MCF 10A (cell line): ENCODE measurements at regions of chr16 and their contacts with region 1.

Region 1: GRCh38 chr16:31179747-31180459 is at the start of gene FUS:
- DNase-seq: peak; percentile 82
- H3K4me3 Mint-ChIP-seq: peak within 1 kb of the TSS; percentile 95
- H3K27ac Mint-ChIP-seq: peak within 1 kb of the TSS; percentile 99
- H3K4me1 Mint-ChIP-seq: peaks cover 26% of the 10 kb centered on the region
- H3K27me3 Mint-ChIP-seq: no peaks in the 10 kb centered on the region
- CTCF ChIP-seq: no peak
- total RNA-seq, gene FUS: 451 and 481 TPM in 2 replicates

Region 2: GRCh38 chr16:31094424-31095120 is 85.3 kb before region 1 on chr16 and contains the start of gene VKORC1:
- CTCF ChIA-PET with region 1: no interaction called
- POLR2A ChIA-PET with region 1: interaction called, 15 read pairs
- intact Hi-C with region 1: no loop called
- DNase-seq: peak; percentile 99
- H3K4me3 Mint-ChIP-seq: peak within 1 kb of the TSS; percentile 85
- H3K27ac Mint-ChIP-seq: peak within 1 kb of the TSS; percentile 77
- H3K4me1 Mint-ChIP-seq: peaks cover 12% of the 10 kb centered on the region
- H3K27me3 Mint-ChIP-seq: no peaks in the 10 kb centered on the region
- CTCF ChIP-seq: no peak
- total RNA-seq, gene VKORC1: 64.7 and 66.3 TPM in 2 replicates

Region 3: GRCh38 chr16:31134625-31135547 is 45.0 kb before region 1 on chr16:
- CTCF ChIA-PET with region 1: no interaction called
- POLR2A ChIA-PET with region 1: interaction called, 20 read pairs
- intact Hi-C with region 1: loop called (anchors 5 kb)
- DNase-seq: peak; percentile 88
- H3K4me3 Mint-ChIP-seq: peak overlapping the region; percentile 85
- H3K27ac Mint-ChIP-seq: peak overlapping the region; percentile 6
- H3K4me1 Mint-ChIP-seq: peaks cover 28% of the 10 kb centered on the region
- H3K27me3 Mint-ChIP-seq: no peaks in the 10 kb centered on the region
- CTCF ChIP-seq: no peak

Region 4: GRCh38 chr16:31202414-31203375 is 22.8 kb after region 1 on chr16 and contains the start of gene PYCARD:
- CTCF ChIA-PET with region 1: interaction called, 5 read pairs
- POLR2A ChIA-PET with region 1: interaction called, 13 read pairs
- intact Hi-C with region 1: no loop called
- DNase-seq: no peak
- H3K4me3 Mint-ChIP-seq: no peak within 1 kb of the TSS
- H3K27ac Mint-ChIP-seq: no peak within 1 kb of the TSS
- H3K4me1 Mint-ChIP-seq: peaks cover 12% of the 10 kb centered on the region
- H3K27me3 Mint-ChIP-seq: peaks cover 21% of the 10 kb centered on the region
- CTCF ChIP-seq: no peak
- total RNA-seq, gene PYCARD: 0.47 and 0.76 TPM in 2 replicates

Region 5: GRCh38 chr16:31382485-31383161 is 202.7 kb after region 1 on chr16:
- CTCF ChIA-PET with region 1: interaction called, 6 read pairs
- POLR2A ChIA-PET with region 1: interaction called, 12 read pairs
- intact Hi-C with region 1: no loop called
- DNase-seq: peak; percentile 60
- H3K4me3 Mint-ChIP-seq: no peak overlapping the region
- H3K27ac Mint-ChIP-seq: no peak overlapping the region
- H3K4me1 Mint-ChIP-seq: peaks cover 15% of the 10 kb centered on the region
- H3K27me3 Mint-ChIP-seq: no peaks in the 10 kb centered on the region
- CTCF ChIP-seq: peak; percentile 65

Region 6: GRCh38 chr16:31451681-31452351 is 271.9 kb after region 1 on chr16:
- CTCF ChIA-PET with region 1: interaction called, 5 read pairs
- POLR2A ChIA-PET with region 1: interaction called, 33 read pairs
- intact Hi-C with region 1: loop called (anchors 2 kb)
- DNase-seq: peak; percentile 77
- H3K4me3 Mint-ChIP-seq: peak overlapping the region; percentile 12
- H3K27ac Mint-ChIP-seq: peak overlapping the region; percentile 94
- H3K4me1 Mint-ChIP-seq: peaks cover 21% of the 10 kb centered on the region
- H3K27me3 Mint-ChIP-seq: no peaks in the 10 kb centered on the region
- CTCF ChIP-seq: peak; percentile 48

Region 7: GRCh38 chr16:31678649-31679325 is 498.9 kb after region 1 on chr16:
- CTCF ChIA-PET with region 1: no interaction called
- POLR2A ChIA-PET with region 1: no interaction called
- intact Hi-C with region 1: no loop called
- DNase-seq: no peak
- H3K4me3 Mint-ChIP-seq: no peak overlapping the region
- H3K27ac Mint-ChIP-seq: no peak overlapping the region
- H3K4me1 Mint-ChIP-seq: no peaks in the 10 kb centered on the region
- H3K27me3 Mint-ChIP-seq: no peaks in the 10 kb centered on the region
- CTCF ChIP-seq: no peak